ENCODE measurements at regions of chr4 and their contacts with region 1.

Region 1: DNA sequence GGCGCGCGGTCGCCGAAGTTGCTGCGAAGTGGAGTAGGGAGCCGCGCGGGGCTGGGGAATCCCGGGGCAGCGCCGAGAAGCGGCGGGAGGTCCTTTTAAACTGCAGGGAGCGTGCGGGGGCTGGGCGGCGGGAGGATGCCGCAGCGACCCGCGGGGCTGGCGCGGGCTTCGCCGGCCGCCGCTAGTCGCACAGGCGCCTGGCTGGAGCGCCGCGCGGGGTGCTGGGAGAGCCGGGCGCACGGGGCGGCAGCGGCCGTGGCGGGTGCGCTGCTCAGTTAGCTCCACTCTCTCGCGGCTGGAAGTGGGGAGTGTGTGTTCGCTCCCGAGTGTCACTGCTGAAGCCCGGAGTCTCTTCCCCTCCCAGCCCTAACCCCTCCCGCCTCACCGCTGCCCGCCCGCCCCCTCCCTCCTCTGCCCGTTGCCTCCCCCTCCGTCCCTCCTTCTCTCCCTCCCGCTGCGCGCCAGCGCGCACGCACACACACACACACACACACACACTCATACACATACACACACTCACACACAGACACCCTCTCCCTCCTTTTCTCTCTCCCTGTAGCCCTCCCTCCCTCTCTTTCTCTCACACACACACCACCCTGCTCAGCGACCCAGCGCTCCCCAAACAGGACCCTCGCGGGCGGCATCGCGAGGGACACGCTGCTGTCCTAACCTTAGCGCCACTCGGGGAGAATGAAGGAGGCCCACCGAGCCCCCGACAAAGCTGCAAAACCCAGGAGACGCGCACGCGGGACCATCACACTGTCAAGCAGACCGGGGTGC is at the start of gene NDNF:
- DNase-seq: peak; percentile 33 to 48
- H3K4me3 ChIP-seq: peak within 1 kb of the TSS; percentile 52
- H3K4me3 Mint-ChIP-seq: peak within 1 kb of the TSS; percentile 89
- H3K27ac Mint-ChIP-seq: no peak within 1 kb of the TSS
- H3K4me1 ChIP-seq: peaks cover 6% of the 10 kb centered on the region; the same call in 1 of the 2 replicates
- H3K4me1 Mint-ChIP-seq: peaks cover 30% of the 10 kb centered on the region
- H3K27me3 ChIP-seq: peaks cover 1% of the 10 kb centered on the region; the same call in 1 of the 2 replicates
- H3K27me3 Mint-ChIP-seq: peaks cover 30% of the 10 kb centered on the region
- CTCF ChIP-seq: no peak
- total RNA-seq, gene NDNF: 3.4 and 3.7 TPM in 2 replicates

Region 2: DNA sequence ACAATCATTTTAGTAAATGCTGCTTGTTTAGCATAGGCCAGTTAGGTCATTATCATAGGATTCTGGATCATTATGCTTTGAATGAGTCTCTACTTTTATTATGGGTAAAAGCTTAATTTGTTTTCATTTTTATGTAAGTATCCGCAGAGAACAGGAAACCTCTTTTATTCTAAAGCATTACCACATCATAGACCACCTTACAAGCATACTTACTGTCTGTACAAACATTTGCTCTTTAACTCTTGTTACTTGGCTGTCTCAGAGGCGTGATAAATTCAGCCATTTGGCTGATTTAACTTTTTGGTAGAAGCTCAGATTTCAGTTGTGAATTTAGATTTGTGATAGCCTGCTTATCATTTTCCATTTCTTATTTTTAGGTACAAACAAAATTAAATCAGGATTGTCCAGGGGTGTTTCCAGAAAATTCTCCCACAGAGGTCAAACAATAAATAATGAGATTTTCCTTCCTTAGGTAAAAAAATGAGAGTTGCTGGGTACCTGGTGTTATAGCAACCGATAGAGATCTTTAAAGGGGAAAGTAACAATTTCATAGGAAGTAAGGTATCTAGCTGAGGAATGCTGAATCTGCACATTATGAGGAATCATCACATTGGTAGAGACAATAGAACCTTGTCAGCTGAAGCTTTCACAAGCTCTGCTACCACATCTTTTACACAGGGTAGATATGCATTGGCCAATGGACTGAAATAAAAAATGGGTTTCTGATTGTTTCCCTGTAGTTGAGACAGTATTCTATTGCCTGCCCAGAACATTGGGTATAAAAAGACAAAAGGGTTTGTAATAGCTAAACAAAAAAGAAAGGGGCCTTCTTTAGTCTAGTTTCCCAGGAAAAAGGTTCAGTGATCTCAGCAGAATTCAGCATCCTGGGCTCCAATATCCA is 62.6 kb before region 1 on chr4:
- CTCF ChIA-PET with region 1: no interaction called
- POLR2A ChIA-PET with region 1: no interaction called
- intact Hi-C with region 1: loop called (anchors 5 kb)
- DNase-seq: no peak
- H3K4me3 ChIP-seq: no peak overlapping the region
- H3K4me3 Mint-ChIP-seq: no peak overlapping the region
- H3K27ac Mint-ChIP-seq: no peak overlapping the region
- H3K4me1 ChIP-seq: peaks cover 6% of the 10 kb centered on the region; the same call in 1 of the 2 replicates
- H3K4me1 Mint-ChIP-seq: peaks cover 12% of the 10 kb centered on the region
- H3K27me3 ChIP-seq: no peaks in the 10 kb centered on the region
- H3K27me3 Mint-ChIP-seq: no peaks in the 10 kb centered on the region
- CTCF ChIP-seq: no peak